ENCODE measurements at regions of chr1 and their contacts with region 1.

Region 1: DNA sequence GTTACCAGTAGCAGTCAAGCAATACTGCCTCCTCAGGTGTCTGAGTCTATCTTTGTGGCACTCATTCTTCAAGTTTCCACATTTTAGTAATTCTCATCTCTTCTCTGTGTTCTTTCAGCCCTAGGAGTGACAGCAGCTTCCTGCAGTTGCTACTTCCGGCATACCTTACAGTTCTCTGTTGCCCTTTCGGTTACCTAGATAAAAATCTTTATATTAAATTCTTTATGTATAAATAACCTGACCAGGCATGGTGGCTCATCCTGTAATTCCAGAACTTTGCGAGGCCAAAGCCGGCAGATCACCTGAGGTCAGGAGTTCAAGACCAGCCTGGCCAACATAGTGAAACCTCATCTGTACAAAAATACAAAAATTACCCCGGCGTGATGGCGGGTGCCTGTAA is 62.9 kb downstream of the CDKN2C start:
- DNase-seq: no peak
- ATAC-seq: no peak
- H3K4me3 ChIP-seq: no peak overlapping the region
- H3K27ac ChIP-seq: no peak overlapping the region
- H3K4me1 ChIP-seq: no peaks in the 10 kb centered on the region
- H3K27me3 ChIP-seq: no peaks in the 10 kb centered on the region
- CTCF ChIP-seq: no peak
- POLR2A ChIP-seq: no peak

Region 2: GRCh38 chr1:50901872-50902271 is 131.0 kb before region 1 on chr1:
- intact Hi-C with region 1: no loop called
- DNase-seq: no peak
- ATAC-seq: no peak
- H3K4me3 ChIP-seq: no peak overlapping the region
- H3K27ac ChIP-seq: no peak overlapping the region
- H3K4me1 ChIP-seq: no peaks in the 10 kb centered on the region
- H3K27me3 ChIP-seq: no peaks in the 10 kb centered on the region
- CTCF ChIP-seq: no peak
- POLR2A ChIP-seq: no peak

Region 3: DNA sequence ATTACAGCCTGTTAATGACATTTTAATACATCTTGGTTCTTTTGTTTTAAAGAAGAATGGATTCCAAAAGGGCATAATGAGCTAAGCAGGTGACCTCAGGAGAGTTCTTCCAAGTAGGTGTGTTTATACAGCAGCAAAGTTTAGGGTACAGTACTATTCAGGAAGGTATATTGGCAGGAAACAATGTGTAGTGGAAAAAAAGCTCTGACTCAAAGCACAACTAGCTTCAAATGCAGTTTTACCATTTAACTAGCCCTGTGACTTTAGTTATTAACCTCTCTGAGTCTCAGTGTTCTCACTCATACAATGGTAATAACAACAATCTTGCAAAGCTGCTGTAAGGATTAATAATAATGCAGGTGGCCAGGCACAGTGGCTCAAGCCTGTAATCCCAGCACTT is 102.7 kb before region 1 on chr1:
- intact Hi-C with region 1: loop called in 1 of 2 experiments (anchors 10 kb)
- DNase-seq: no peak
- ATAC-seq: no peak
- H3K4me3 ChIP-seq: no peak overlapping the region
- H3K27ac ChIP-seq: no peak overlapping the region
- H3K4me1 ChIP-seq: no peaks in the 10 kb centered on the region
- H3K27me3 ChIP-seq: no peaks in the 10 kb centered on the region
- CTCF ChIP-seq: no peak
- POLR2A ChIP-seq: no peak

Measured in right lobe of liver (tissue), 6 donors.